Naive thymus-derived CD4-positive, alpha-beta T cell (primary cell): ENCODE measurements at regions of chr9 and their contacts with region 1.

Region 1: DNA sequence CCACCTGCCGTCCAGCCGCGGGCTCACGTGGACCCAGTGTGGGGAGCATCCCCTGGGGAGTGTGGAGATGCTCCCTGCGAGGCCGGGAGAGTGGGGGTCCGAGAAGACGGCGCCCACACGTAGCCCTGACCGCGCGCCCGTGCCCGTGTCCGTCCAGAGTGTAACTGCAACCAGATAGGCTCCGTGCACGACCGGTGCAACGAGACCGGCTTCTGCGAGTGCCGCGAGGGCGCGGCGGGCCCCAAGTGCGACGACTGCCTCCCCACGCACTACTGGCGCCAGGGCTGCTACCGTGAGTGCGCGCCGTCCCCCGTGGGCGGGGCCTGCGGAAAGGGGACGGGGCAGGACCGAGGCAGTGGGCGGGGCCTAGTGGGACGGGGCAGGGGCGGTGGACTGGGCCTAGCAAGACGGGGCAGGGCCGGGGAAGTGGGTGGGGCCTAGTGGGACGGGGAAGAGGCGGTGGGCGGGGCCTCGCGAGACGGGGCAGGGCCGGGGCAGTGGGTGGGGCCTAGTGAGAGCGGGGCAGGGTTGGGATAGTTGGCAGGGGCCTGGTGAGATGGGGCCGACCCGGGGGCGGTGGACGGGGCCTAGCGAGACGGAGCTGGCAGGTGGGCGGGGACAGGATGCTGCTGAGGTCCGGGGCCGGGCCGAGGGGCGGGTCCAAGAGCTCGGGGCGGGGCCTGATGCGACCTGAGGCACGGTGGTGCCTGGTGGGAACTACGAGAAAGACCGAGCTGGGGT is 79.1 kb downstream of the NTNG2 start:
- DNase-seq: peak; percentile 98 to 100 (median 99)
- ATAC-seq: peak; percentile 94
- H3K4me3 ChIP-seq: peak overlapping the region; percentile 77
- H3K4me3 Mint-ChIP-seq: peak overlapping the region; percentile 97 to 99 (median 98)
- H3K27ac ChIP-seq: peak overlapping the region; percentile 69
- H3K27ac Mint-ChIP-seq: peak overlapping the region; percentile 90 to 96 (median 94)
- H3K4me1 ChIP-seq: peaks cover 11 to 17% of the 10 kb centered on the region in 2 donors
- H3K4me1 Mint-ChIP-seq: peaks cover 5 to 24% (median 21%) of the 10 kb centered on the region in 7 donors
- H3K27me3 ChIP-seq: no peaks in the 10 kb centered on the region
- H3K27me3 Mint-ChIP-seq: peaks cover 0 to 15% (median 0%) of the 10 kb centered on the region in 5 donors

Region 2: DNA sequence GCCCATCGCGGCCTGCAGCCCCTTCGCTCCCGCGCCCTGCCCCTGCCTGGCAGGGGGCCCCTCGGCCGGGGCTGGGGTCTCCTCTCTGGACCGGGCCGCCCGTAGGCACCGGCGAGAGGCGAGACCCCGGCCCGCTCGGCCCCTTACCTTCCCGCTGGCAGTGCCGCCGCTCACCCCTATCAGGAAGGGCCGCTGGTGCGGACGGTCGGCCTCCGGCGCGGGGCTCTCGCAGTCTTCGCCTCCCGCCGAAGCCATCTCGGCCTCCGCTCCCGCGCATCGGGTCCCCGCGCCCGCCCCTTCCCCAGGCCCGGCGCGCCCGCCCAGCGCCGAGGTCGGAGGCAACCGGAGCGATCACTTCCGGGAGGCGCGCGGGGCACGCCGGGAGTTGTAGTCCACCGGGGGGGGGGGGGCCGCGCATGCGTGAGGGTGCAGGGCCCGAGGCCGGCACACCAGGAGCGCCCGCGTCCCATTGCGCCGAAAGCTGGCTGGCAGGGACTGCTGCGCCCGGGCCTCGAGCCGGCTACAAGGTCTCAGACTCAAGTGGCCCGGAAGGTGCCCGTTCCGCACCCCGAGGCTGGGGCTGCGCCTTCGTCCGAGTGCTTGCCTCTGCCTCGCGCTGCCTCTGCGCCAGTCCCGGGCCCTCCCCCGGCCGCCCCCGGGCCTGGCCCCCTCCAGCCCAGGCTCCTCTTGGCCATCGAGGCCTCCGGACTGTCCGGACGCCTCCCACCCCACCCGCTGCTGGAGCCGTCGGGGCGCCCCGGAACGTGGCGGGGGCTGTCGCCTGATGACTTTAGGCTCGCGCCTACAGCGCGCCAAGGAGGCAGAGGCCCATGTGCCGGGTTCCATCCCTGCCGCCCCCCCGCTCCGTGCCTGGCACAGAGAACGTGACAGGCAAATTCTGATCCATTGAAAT is 709.7 kb before region 1 on chr9 and contains the start of gene UCK1:
- CTCF ChIA-PET with region 1: no interaction called
- POLR2A ChIA-PET with region 1: no interaction called
- intact Hi-C with region 1: loop called in 1 of 2 experiments (anchors 1 kb)
- DNase-seq: peak; percentile 58 to 84 (median 71)
- ATAC-seq: peak; percentile 97
- H3K4me3 ChIP-seq: peak within 1 kb of the TSS; percentile 63
- H3K4me3 Mint-ChIP-seq: peak within 1 kb of the TSS; percentile 59 to 84 (median 77)
- H3K27ac ChIP-seq: peak within 1 kb of the TSS; percentile 90
- H3K27ac Mint-ChIP-seq: peak within 1 kb of the TSS in 6 of 9 donors; percentile 46 to 85 (median 68)
- H3K4me1 ChIP-seq: peaks cover 21 to 30% of the 10 kb centered on the region in 2 donors
- H3K4me1 Mint-ChIP-seq: peaks cover 15 to 46% (median 34%) of the 10 kb centered on the region in 7 donors
- H3K27me3 ChIP-seq: no peaks in the 10 kb centered on the region
- H3K27me3 Mint-ChIP-seq: no peaks in the 10 kb centered on the region
- total RNA-seq, gene UCK1: 21.8 to 40.1 (median 29.3) TPM

Region 3: GRCh38 chr9:131981116-131981776 is 259.7 kb before region 1 on chr9:
- CTCF ChIA-PET with region 1: no interaction called
- POLR2A ChIA-PET with region 1: no interaction called
- intact Hi-C with region 1: no loop called
- DNase-seq: no peak
- ATAC-seq: no peak
- H3K4me3 ChIP-seq: no peak overlapping the region
- H3K4me3 Mint-ChIP-seq: no peak overlapping the region
- H3K27ac ChIP-seq: no peak overlapping the region
- H3K27ac Mint-ChIP-seq: no peak overlapping the region
- H3K4me1 ChIP-seq: no peaks in the 10 kb centered on the region
- H3K4me1 Mint-ChIP-seq: peaks cover 0 to 21% (median 0%) of the 10 kb centered on the region in 7 donors
- H3K27me3 ChIP-seq: no peaks in the 10 kb centered on the region
- H3K27me3 Mint-ChIP-seq: no peaks in the 10 kb centered on the region

Region 4: DNA sequence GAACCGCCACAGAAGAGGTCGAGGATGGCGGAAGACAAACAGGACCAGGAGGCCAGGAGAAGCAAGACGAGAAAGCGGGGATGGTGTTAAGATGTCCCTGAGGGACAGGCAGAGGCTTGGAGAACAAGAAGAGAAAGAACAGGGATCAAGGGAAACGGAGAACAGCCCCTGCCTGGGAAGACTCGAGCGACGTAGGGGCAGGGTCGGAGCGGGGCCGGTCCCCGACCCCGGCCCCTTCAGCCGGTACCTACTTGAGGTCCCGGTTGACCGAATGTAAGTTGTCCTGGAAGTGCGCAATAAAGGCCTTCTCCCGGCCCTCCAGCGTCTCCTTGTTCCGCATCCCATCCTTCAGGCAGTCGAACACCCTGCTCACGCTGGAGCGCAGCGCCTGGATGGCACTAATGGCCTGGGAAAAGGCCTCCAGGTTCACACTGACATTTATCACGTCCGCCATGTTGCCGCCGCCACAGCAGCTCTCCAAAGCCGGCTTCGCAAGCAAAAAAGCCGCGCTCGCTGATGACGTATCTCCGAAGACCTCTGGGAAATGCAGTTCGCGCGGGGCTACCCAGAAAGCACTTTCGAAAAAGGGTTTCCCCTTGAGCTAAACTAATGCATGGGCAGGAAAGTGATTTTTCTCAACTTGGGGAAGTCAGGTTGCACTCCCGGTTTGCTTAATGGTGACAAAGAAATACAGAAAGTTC is 161.4 kb before region 1 on chr9 and contains the start of gene MED27:
- CTCF ChIA-PET with region 1: no interaction called
- POLR2A ChIA-PET with region 1: no interaction called
- intact Hi-C with region 1: loop called (anchors 1 to 5 kb)
- DNase-seq: peak; percentile 79 to 94 (median 90)
- ATAC-seq: peak; percentile 98
- H3K4me3 ChIP-seq: peak within 1 kb of the TSS; percentile 77
- H3K4me3 Mint-ChIP-seq: peak within 1 kb of the TSS; percentile 93 to 99 (median 98)
- H3K27ac ChIP-seq: peak within 1 kb of the TSS; percentile 72
- H3K27ac Mint-ChIP-seq: peak within 1 kb of the TSS; percentile 69 to 96 (median 92)
- H3K4me1 ChIP-seq: peaks cover 13 to 15% of the 10 kb centered on the region in 2 donors
- H3K4me1 Mint-ChIP-seq: peaks cover 31 to 53% (median 49%) of the 10 kb centered on the region in 7 donors
- H3K27me3 ChIP-seq: no peaks in the 10 kb centered on the region
- H3K27me3 Mint-ChIP-seq: peaks cover 0 to 7% (median 4%) of the 10 kb centered on the region in 5 donors
- total RNA-seq, gene MED27: 11.5 to 26.9 (median 21.3) TPM

Region 5: GRCh38 chr9:132260846-132261245 is 19.9 kb after region 1 on chr9:
- CTCF ChIA-PET with region 1: interaction called, 12 read pairs
- POLR2A ChIA-PET with region 1: interaction called, 3 read pairs
- intact Hi-C with region 1: loop called in 1 of 2 experiments (anchors 1 kb)
- DNase-seq: no peak
- ATAC-seq: no peak
- H3K4me3 ChIP-seq: no peak overlapping the region
- H3K4me3 Mint-ChIP-seq: no peak overlapping the region
- H3K27ac ChIP-seq: no peak overlapping the region
- H3K27ac Mint-ChIP-seq: peak overlapping the region in 2 of 9 donors; percentile 72 to 73
- H3K4me1 ChIP-seq: peaks cover 0 to 8% of the 10 kb centered on the region in 2 donors
- H3K4me1 Mint-ChIP-seq: peaks cover 0 to 13% (median 10%) of the 10 kb centered on the region in 7 donors
- H3K27me3 ChIP-seq: no peaks in the 10 kb centered on the region
- H3K27me3 Mint-ChIP-seq: no peaks in the 10 kb centered on the region

Region 6: DNA sequence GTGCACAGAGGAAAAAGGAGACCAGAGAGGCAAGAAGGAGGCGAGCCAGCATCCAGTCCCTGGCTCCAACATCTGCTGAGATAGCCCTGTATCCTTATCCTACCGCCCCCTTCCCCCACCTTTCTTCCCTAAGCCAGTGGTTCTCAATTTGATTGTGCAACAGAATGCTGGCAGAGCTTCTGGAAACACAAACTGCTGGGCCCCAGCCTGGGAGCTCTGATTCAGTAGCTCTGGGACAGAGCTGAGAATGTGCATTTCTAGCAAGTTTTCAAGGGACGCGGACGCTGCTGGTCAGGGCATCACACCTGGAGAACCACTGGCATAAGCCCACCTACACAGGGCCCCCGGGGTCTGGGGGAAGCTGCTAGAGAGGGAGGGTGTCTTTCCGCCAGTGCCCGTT is 616.1 kb after region 1 on chr9:
- CTCF ChIA-PET with region 1: no interaction called
- POLR2A ChIA-PET with region 1: no interaction called
- intact Hi-C with region 1: no loop called
- DNase-seq: no peak
- ATAC-seq: no peak
- H3K4me3 ChIP-seq: no peak overlapping the region
- H3K4me3 Mint-ChIP-seq: no peak overlapping the region
- H3K27ac ChIP-seq: no peak overlapping the region
- H3K27ac Mint-ChIP-seq: peak overlapping the region in 2 of 9 donors; percentile 28 to 51
- H3K4me1 ChIP-seq: no peaks in the 10 kb centered on the region
- H3K4me1 Mint-ChIP-seq: peaks cover 0 to 10% (median 0%) of the 10 kb centered on the region in 7 donors
- H3K27me3 ChIP-seq: no peaks in the 10 kb centered on the region
- H3K27me3 Mint-ChIP-seq: peaks cover 0 to 17% (median 6%) of the 10 kb centered on the region in 5 donors

Region 7: GRCh38 chr9:133030317-133031129 is 789.6 kb after region 1 on chr9 and contains the start of gene GTF3C5:
- CTCF ChIA-PET with region 1: no interaction called
- POLR2A ChIA-PET with region 1: interaction called, 3 read pairs
- intact Hi-C with region 1: loop called in 1 of 2 experiments (anchors 2 kb)
- DNase-seq: peak; percentile 77 to 97 (median 94)
- ATAC-seq: peak; percentile 98
- H3K4me3 ChIP-seq: peak within 1 kb of the TSS; percentile 83
- H3K4me3 Mint-ChIP-seq: peak within 1 kb of the TSS; percentile 87 to 100 (median 98)
- H3K27ac ChIP-seq: peak within 1 kb of the TSS; percentile 90
- H3K27ac Mint-ChIP-seq: peak within 1 kb of the TSS; percentile 94 to 99 (median 98)
- H3K4me1 ChIP-seq: peaks cover 13 to 25% of the 10 kb centered on the region in 2 donors
- H3K4me1 Mint-ChIP-seq: peaks cover 34 to 81% (median 59%) of the 10 kb centered on the region in 7 donors
- H3K27me3 ChIP-seq: no peaks in the 10 kb centered on the region
- H3K27me3 Mint-ChIP-seq: no peaks in the 10 kb centered on the region
- total RNA-seq, gene GTF3C5: 43.9 to 77.9 (median 73.9) TPM